ENCODE measurements at regions of chr12 and their contacts with region 1.

Region 1: GRCh38 chr12:89756585-89757321 is 48.1 kb upstream of the ATP2B1 start:
- DNase-seq: no peak
- H3K4me3 Mint-ChIP-seq: peak overlapping the region; percentile 44
- H3K27ac Mint-ChIP-seq: peak overlapping the region; percentile 79
- H3K4me1 Mint-ChIP-seq: peaks cover 36% of the 10 kb centered on the region
- H3K27me3 Mint-ChIP-seq: no peaks in the 10 kb centered on the region

Region 2: GRCh38 chr12:89663577-89664357 is 93.0 kb before region 1 on chr12:
- CTCF ChIA-PET with region 1: no interaction called
- POLR2A ChIA-PET with region 1: no interaction called
- intact Hi-C with region 1: loop called (anchors 2 kb)
- DNase-seq: peak; percentile 24
- H3K4me3 Mint-ChIP-seq: no peak overlapping the region
- H3K27ac Mint-ChIP-seq: no peak overlapping the region
- H3K4me1 Mint-ChIP-seq: peaks cover 67% of the 10 kb centered on the region
- H3K27me3 Mint-ChIP-seq: no peaks in the 10 kb centered on the region

Region 3: GRCh38 chr12:89768586-89769486 is 12.1 kb after region 1 on chr12:
- CTCF ChIA-PET with region 1: no interaction called
- POLR2A ChIA-PET with region 1: interaction called, 3 read pairs
- intact Hi-C with region 1: loop called (anchors 1 kb)
- DNase-seq: peak; percentile 57
- H3K4me3 Mint-ChIP-seq: no peak overlapping the region
- H3K27ac Mint-ChIP-seq: peak overlapping the region; percentile 3
- H3K4me1 Mint-ChIP-seq: peaks cover 48% of the 10 kb centered on the region
- H3K27me3 Mint-ChIP-seq: no peaks in the 10 kb centered on the region

Region 4: DNA sequence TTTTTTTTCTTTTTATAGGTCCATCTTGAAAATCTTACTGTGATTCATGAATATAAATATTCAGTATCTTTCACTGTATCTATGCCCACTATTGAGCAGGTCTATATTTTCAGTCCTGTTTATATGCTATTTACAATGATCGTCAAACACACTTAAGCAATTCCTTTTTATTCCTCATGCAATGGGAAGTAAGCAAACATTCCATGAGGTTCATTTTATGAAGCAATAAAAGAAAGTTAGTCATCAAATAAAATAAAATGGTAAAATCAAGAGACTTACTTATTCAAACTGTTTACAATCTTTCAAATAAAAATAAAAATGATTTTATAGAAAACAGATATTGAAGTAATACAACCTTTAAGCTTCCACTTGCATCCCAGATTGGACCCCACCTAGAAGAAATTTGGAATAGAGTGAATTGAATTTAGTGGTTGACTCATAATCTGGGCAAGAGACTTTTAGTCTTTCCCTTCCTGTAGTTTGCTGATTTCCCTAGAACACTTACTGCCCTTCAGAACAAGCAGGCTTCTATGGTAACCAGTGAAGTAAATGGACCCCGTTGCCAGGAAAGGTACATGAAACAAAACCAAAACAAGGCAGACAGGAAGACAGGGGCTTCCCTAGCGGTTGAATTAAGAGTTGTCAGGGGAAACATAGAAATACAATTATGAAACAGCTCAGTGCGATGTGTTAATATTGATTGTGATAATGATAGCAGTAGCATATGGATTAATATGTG is 192.9 kb after region 1 on chr12:
- CTCF ChIA-PET with region 1: no interaction called
- POLR2A ChIA-PET with region 1: no interaction called
- intact Hi-C with region 1: loop called (anchors 1 kb)
- DNase-seq: peak; percentile 60
- H3K4me3 Mint-ChIP-seq: peak overlapping the region; percentile 4
- H3K27ac Mint-ChIP-seq: peak overlapping the region; percentile 26
- H3K4me1 Mint-ChIP-seq: peaks cover 51% of the 10 kb centered on the region
- H3K27me3 Mint-ChIP-seq: no peaks in the 10 kb centered on the region

Region 5: DNA sequence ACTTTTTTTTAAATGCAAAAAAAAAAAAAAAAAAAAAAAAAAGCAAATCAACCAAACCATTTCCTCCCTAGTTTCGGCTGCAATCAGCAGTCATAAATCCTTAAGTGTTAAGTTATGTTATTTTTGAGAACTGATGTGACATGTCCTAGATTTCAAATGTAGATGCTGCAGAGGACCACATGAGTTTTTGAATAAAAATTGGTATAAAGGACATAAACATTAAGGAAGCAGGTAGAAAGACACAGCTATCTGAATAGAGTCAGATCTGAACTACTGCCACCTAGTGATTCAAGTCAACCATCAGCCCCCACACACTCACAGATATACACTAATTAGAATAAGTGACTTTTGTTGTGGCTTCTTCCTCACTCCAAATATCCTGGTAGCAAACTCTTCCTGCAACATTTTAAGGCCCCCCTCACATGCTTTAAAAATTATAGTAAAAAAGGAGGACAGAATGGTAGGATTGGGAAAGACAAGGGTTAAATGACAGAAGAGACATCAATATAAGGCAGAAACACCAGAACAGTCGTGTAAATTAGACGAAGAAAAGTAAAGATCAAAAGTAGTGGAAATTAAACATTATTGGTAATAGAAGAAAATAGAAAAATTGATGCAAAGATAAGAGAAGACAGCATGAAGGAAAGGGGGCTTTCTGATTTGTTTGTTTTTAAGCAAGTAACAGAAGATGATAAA is 346.4 kb after region 1 on chr12:
- CTCF ChIA-PET with region 1: no interaction called
- POLR2A ChIA-PET with region 1: no interaction called
- intact Hi-C with region 1: loop called (anchors 5 kb)
- DNase-seq: peak; percentile 13
- H3K4me3 Mint-ChIP-seq: peak overlapping the region; percentile 19
- H3K27ac Mint-ChIP-seq: no peak overlapping the region
- H3K4me1 Mint-ChIP-seq: peaks cover 13% of the 10 kb centered on the region
- H3K27me3 Mint-ChIP-seq: no peaks in the 10 kb centered on the region

Region 6: GRCh38 chr12:91126516-91126915 is 1369.8 kb after region 1 on chr12:
- CTCF ChIA-PET with region 1: no interaction called
- POLR2A ChIA-PET with region 1: no interaction called
- intact Hi-C with region 1: no loop called
- DNase-seq: no peak
- H3K4me3 Mint-ChIP-seq: no peak overlapping the region
- H3K27ac Mint-ChIP-seq: no peak overlapping the region
- H3K4me1 Mint-ChIP-seq: no peaks in the 10 kb centered on the region
- H3K27me3 Mint-ChIP-seq: no peaks in the 10 kb centered on the region

Measured in activated CD4-positive, alpha-beta memory T cell treated with anti-CD3 and anti-CD28 coated beads for 36 hours (primary cell).